MCF 10A (cell line): ENCODE measurements at regions of chr10 and their contacts with region 1.

Region 1: GRCh38 chr10:88239212-88239611 is 343.9 kb downstream of the RNLS start:
- DNase-seq: no peak
- H3K4me3 Mint-ChIP-seq: no peak overlapping the region
- H3K27ac Mint-ChIP-seq: no peak overlapping the region
- H3K4me1 Mint-ChIP-seq: no peaks in the 10 kb centered on the region
- H3K27me3 Mint-ChIP-seq: no peaks in the 10 kb centered on the region
- CTCF ChIP-seq: no peak

Region 2: DNA sequence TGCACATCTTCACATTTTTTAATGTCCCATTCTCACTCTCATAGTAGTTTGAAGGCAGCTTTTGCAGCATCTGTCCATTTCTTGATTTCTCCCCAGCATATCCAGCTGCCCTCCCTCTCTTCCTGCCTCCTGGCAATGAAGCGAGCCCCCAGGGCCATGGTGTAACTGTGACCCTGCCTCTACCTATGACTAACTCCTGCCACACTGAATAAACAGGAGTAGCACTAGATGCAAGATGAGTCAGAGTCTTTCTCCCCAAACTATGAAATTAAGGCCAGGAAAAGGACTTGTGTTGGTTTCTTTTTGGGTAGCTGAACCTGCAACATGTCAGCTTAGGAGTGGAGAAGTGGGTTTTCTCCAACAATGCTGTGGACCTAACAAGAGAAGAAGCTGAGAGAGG is 14.9 kb after region 1 on chr10:
- CTCF ChIA-PET with region 1: interaction called, 3 read pairs
- POLR2A ChIA-PET with region 1: interaction called, 13 read pairs
- intact Hi-C with region 1: no loop called
- DNase-seq: peak; percentile 95
- H3K4me3 Mint-ChIP-seq: no peak overlapping the region
- H3K27ac Mint-ChIP-seq: peak overlapping the region; percentile 16
- H3K4me1 Mint-ChIP-seq: peaks cover 13% of the 10 kb centered on the region
- H3K27me3 Mint-ChIP-seq: no peaks in the 10 kb centered on the region
- CTCF ChIP-seq: no peak